GM13977 (cell line): ENCODE measurements at regions of chr15 and their contacts with region 1.

Region 1: DNA sequence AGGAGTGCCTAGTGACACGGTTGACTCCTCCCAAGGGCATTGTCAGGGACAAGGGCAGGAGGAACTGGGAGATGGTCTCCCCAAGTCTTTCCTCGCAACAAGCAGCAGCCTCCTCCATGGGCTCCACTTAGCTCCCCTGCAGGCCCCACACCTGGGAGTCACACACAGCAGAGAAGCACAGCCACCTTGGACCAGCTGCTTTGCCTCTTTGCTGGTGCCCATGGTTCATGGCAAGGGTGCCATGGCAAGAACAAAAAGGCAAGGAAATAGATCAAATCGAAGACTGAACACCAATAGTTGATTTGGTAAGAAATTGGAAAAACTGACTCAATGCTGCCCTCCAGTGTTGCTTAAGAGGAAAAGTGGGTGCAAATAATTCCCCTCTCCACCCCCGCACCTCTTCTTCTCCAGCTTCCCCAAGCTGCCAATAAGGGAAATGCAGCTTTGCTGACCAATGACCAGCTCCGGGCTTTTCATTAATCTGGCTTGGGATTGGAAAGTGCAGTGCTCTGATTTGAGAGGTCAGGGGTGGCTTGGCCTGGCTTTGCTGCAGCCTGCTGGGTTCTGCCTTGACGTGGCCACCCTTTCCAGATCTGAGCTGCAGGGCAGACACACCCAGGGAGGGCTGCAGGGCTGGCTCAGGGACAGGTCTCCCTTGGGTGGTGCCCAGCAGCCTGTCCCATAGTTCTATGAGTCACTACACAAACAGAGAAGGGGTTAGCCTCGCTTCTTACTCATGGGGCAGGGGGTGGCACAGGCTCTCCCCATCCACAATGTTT is 162.0 kb downstream of the KLF13 start:
- DNase-seq: peak; percentile 83
- CTCF ChIP-seq: peak; percentile 71

Region 2: DNA sequence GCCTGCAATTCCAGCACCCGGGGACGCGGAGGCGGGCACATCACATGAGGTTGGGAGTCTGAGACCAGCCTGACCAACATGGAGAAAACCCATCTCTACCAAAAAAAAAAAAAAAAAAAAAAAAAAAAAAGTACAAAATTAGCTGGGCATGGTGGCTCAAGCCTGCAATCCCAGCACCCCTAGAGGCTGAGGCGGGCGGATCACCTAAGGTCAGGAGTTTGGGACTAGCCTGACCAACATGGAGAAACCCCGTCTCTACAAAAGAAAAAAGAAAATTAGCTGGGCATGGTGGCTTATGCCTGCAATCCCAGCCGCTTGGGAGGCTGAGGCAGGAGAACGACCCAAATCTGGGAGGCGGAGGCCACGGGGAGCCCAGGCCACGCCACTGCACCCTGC is 592.4 kb before region 1 on chr15:
- in situ Hi-C with region 1: loop called (anchors 10 kb)
- DNase-seq: no peak
- CTCF ChIP-seq: no peak

Region 3: GRCh38 chr15:31200735-31201151 is 287.9 kb before region 1 on chr15:
- in situ Hi-C with region 1: loop called (anchors 10 kb)
- DNase-seq: no peak
- CTCF ChIP-seq: peak; percentile 32

Region 4: DNA sequence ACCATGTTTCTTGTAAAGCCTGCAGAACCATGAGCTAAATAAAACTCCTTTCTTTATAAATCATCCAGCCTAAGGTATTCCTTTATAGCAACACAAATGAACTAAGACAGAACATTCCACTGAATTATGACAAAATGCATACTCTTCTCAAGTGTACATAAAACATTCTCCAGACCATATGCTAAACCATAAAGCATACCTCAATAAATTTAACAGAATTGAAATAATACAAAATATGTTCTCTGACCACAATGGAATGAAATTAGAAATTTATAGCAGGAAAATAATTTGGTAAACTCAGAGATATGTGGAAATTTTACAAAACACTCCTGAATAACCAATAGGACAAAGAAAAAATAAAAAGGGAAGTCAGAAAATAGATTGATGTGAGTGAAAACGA is 73.4 kb before region 1 on chr15:
- in situ Hi-C with region 1: no loop called
- DNase-seq: no peak
- CTCF ChIP-seq: no peak

Region 5: GRCh38 chr15:31435261-31435911 is 53.2 kb before region 1 on chr15:
- in situ Hi-C with region 1: loop called (anchors 10 kb)
- DNase-seq: peak; percentile 76
- CTCF ChIP-seq: peak; percentile 78